A549 (cell line): ENCODE measurements at regions of chr12 and their contacts with region 1.

Region 1: GRCh38 chr12:21697904-21698630 is 40.4 kb upstream of the LDHB start:
- DNase-seq: peak in 1 of 2 experiments; percentile 42
- ATAC-seq: peak in 1 of 2 experiments; percentile 53; a peak in 2 of 6 replicates
- H3K4me3 ChIP-seq: no peak overlapping the region
- H3K27ac ChIP-seq: no peak overlapping the region
- H3K4me1 ChIP-seq: no peaks in the 10 kb centered on the region
- CTCF ChIP-seq: peak; percentile 84
- EP300 ChIP-seq: no peak
- POLR2A ChIP-seq: no peak
- RAD21 ChIP-seq: peak; percentile 80 to 84

Region 2: GRCh38 chr12:21710948-21711775 is 13.1 kb after region 1 on chr12:
- CTCF ChIA-PET with region 1: interaction called, 10 read pairs
- POLR2A ChIA-PET with region 1: no interaction called
- DNase-seq: no peak
- ATAC-seq: no peak
- H3K4me3 ChIP-seq: no peak overlapping the region
- H3K27ac ChIP-seq: no peak overlapping the region
- H3K4me1 ChIP-seq: no peaks in the 10 kb centered on the region
- CTCF ChIP-seq: no peak
- EP300 ChIP-seq: no peak
- POLR2A ChIP-seq: no peak
- RAD21 ChIP-seq: no peak

Region 3: GRCh38 chr12:21764065-21764464 is 66.0 kb after region 1 on chr12:
- CTCF ChIA-PET with region 1: no interaction called
- POLR2A ChIA-PET with region 1: no interaction called
- DNase-seq: no peak
- ATAC-seq: no peak
- H3K4me3 ChIP-seq: no peak overlapping the region
- H3K27ac ChIP-seq: no peak overlapping the region
- H3K4me1 ChIP-seq: no peaks in the 10 kb centered on the region
- CTCF ChIP-seq: no peak
- EP300 ChIP-seq: no peak
- POLR2A ChIP-seq: no peak
- RAD21 ChIP-seq: no peak

Region 4: GRCh38 chr12:21989819-21990412 is 291.8 kb after region 1 on chr12:
- CTCF ChIA-PET with region 1: interaction called, 76 read pairs
- POLR2A ChIA-PET with region 1: interaction called, 3 read pairs
- DNase-seq: peak in 1 of 2 experiments; percentile 39
- ATAC-seq: peak in 1 of 2 experiments; percentile 65; a peak in 2 of 6 replicates
- H3K4me3 ChIP-seq: no peak overlapping the region
- H3K27ac ChIP-seq: no peak overlapping the region
- H3K4me1 ChIP-seq: no peaks in the 10 kb centered on the region
- CTCF ChIP-seq: peak; percentile 61
- EP300 ChIP-seq: no peak
- POLR2A ChIP-seq: no peak
- RAD21 ChIP-seq: peak; percentile 58 to 66

Region 5: GRCh38 chr12:22018860-22019259 is 320.8 kb after region 1 on chr12:
- CTCF ChIA-PET with region 1: interaction called, 25 read pairs
- POLR2A ChIA-PET with region 1: no interaction called
- DNase-seq: peak in 1 of 2 experiments; percentile 15
- ATAC-seq: no peak; a peak in 1 of 6 replicates
- H3K4me3 ChIP-seq: no peak overlapping the region
- H3K27ac ChIP-seq: no peak overlapping the region
- H3K4me1 ChIP-seq: no peaks in the 10 kb centered on the region
- CTCF ChIP-seq: peak; percentile 69
- EP300 ChIP-seq: no peak
- POLR2A ChIP-seq: no peak
- RAD21 ChIP-seq: peak; percentile 58 to 74

Region 6: DNA sequence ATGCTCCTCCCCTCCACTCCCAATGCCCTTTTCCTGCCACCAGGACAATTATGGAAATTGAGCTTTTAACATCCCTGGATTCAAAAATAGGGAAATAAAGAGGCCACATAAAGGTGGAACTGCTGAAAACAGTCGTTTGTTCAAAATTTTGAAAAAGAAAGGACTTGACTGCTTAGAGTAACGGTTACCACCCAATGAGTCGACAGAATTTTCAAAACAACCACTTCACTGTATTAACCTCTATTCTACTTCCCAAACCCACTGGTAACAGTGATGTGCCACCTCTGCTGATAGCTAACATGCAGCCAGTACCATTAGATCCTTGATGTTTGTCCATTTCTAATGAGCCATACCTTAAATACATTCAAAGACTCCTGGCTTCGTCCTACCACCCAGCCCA is 631.6 kb after region 1 on chr12:
- CTCF ChIA-PET with region 1: no interaction called
- POLR2A ChIA-PET with region 1: no interaction called
- DNase-seq: no peak
- ATAC-seq: no peak
- H3K4me3 ChIP-seq: no peak overlapping the region
- H3K27ac ChIP-seq: no peak overlapping the region
- H3K4me1 ChIP-seq: peaks cover 8% of the 10 kb centered on the region; the same call in 1 of the 3 replicates
- CTCF ChIP-seq: no peak
- EP300 ChIP-seq: no peak
- POLR2A ChIP-seq: no peak
- RAD21 ChIP-seq: no peak